ENCODE measurements at regions of chr2 and their contacts with region 1.

Region 1: GRCh38 chr2:51899643-51900042 is 867.7 kb upstream of the NRXN1 start:
- DNase-seq: no peak
- H3K4me3 ChIP-seq: no peak overlapping the region
- H3K27ac ChIP-seq: no peak overlapping the region
- H3K4me1 ChIP-seq: no peaks in the 10 kb centered on the region
- H3K27me3 ChIP-seq: no peaks in the 10 kb centered on the region
- CTCF ChIP-seq: no peak
- POLR2A ChIP-seq: no peak

Region 2: GRCh38 chr2:50529600-50530218 is 1369.9 kb before region 1 on chr2:
- intact Hi-C with region 1: loop called (anchors 5 kb)
- DNase-seq: no peak
- H3K4me3 ChIP-seq: no peak overlapping the region
- H3K27ac ChIP-seq: no peak overlapping the region
- H3K4me1 ChIP-seq: no peaks in the 10 kb centered on the region
- H3K27me3 ChIP-seq: no peaks in the 10 kb centered on the region
- CTCF ChIP-seq: peak; percentile 48 to 53 (median 48)
- POLR2A ChIP-seq: no peak

Region 3: GRCh38 chr2:50582164-50582563 is 1317.5 kb before region 1 on chr2:
- intact Hi-C with region 1: no loop called
- DNase-seq: no peak
- H3K4me3 ChIP-seq: no peak overlapping the region
- H3K27ac ChIP-seq: no peak overlapping the region
- H3K4me1 ChIP-seq: no peaks in the 10 kb centered on the region
- H3K27me3 ChIP-seq: no peaks in the 10 kb centered on the region
- CTCF ChIP-seq: no peak
- POLR2A ChIP-seq: no peak

Region 4: GRCh38 chr2:50674876-50675275 is 1224.8 kb before region 1 on chr2:
- intact Hi-C with region 1: loop called (anchors 5 kb)
- DNase-seq: no peak
- H3K4me3 ChIP-seq: no peak overlapping the region
- H3K27ac ChIP-seq: no peak overlapping the region
- H3K4me1 ChIP-seq: no peaks in the 10 kb centered on the region
- H3K27me3 ChIP-seq: no peaks in the 10 kb centered on the region
- CTCF ChIP-seq: no peak
- POLR2A ChIP-seq: no peak

Measured in breast epithelium (tissue), 4 donors.